Lower leg skin (tissue), 4 donors: ENCODE measurements at regions of chr12 and their contacts with region 1.

Region 1: DNA sequence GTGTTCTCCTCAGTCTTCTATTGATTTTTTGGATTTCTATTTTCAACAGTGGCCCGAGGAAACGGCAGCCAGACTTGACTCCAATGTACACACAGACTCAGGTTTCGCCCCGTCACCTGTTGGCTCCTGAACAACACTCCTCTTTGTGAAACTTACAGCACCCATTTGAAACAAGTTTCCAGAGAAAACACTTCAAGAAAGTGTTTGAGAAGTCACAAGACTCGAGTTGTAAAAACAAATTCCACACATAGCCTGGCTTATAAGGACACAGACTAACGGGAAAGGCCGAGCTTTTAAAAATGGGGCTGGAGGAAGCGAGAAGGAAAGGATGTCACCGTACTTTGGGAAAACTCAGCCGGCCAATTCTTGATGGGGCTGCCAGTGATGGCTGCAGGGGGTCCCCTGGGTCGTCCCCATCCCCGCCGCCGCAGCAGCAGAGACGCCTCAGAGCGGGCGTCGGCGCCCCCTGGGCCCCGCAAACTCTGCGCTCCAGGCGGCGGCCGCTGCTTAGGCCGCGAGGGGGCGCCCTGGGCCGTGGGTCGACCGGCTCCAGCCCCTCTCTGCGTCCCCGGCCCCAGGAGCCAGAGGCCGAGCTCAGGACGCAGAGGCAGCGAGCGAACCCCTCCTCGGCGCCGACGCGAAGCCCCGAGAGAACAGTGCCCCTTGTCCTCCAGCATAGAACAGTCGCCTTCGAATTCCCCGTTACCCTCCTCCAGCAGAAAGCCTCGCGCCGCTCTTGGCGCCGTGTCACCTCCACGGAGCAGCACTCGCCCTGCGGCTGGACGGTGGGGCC is 106.9 kb downstream of the PRICKLE1 start:
- DNase-seq: peak; percentile 28 to 94
- H3K4me3 ChIP-seq: peak overlapping the region; percentile 53
- CTCF ChIP-seq: peak in 1 of 3 donors; percentile 22
- POLR2A ChIP-seq: no peak

Region 2: GRCh38 chr12:43282106-43282505 is 799.5 kb after region 1 on chr12:
- intact Hi-C with region 1: loop called (anchors 10 kb)
- DNase-seq: no peak
- H3K4me3 ChIP-seq: no peak overlapping the region
- CTCF ChIP-seq: no peak
- POLR2A ChIP-seq: no peak

Region 3: GRCh38 chr12:43436597-43436996 is 954.0 kb after region 1 on chr12:
- intact Hi-C with region 1: no loop called
- DNase-seq: no peak
- H3K4me3 ChIP-seq: no peak overlapping the region
- CTCF ChIP-seq: no peak
- POLR2A ChIP-seq: no peak

Region 4: DNA sequence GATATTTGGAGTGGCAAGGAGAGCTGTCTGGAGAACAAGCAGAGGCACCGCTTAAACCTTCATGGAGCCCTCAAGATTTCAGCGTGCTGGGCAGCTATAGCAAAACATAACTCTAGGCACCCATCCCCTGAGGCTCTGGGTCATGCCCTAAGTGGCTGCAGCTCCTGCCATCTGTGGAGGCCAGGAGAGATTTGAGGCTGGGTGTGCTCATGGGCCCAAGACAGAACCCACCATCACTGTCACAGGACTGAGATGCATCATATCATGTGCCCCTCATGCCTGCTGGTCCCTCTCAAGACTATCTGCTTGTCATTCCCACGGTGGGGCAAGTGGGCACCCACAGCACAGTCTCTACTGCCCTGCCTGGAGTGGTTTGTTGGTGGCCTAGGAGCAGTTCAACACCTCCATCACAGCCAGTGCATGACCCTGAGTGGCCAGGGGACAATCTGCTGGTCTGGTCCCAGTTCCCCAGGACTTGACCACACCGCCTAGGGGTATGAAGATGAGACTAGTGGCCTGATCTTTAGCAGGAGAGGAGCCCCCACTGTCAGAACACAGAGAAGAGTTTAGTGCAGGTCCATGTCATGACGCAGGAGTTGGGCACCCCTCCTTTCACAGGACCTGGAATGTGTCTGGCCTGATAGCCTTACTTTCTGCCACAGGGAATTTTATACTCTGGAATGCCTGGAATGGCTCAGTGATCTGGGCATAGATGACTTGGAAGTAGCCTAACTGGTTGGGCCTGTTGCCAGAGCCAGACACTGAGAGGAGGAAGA is 1192.4 kb after region 1 on chr12:
- intact Hi-C with region 1: no loop called
- DNase-seq: no peak
- H3K4me3 ChIP-seq: no peak overlapping the region
- CTCF ChIP-seq: no peak
- POLR2A ChIP-seq: no peak